ENCODE measurements at regions of chr19 and their contacts with region 1.

Region 1: GRCh38 chr19:43809762-43810696 is 7.8 kb upstream of the LYPD5 start:
- DNase-seq: peak in 3 of 14 experiments; percentile 63 to 76 (median 73)
- ATAC-seq: peak; percentile 70
- H3K4me3 ChIP-seq: no peak overlapping the region
- H3K4me3 Mint-ChIP-seq: no peak overlapping the region
- H3K27ac ChIP-seq: no peak overlapping the region
- H3K27ac Mint-ChIP-seq: no peak overlapping the region
- H3K4me1 ChIP-seq: peaks cover 8% of the 10 kb centered on the region
- H3K4me1 Mint-ChIP-seq: no peaks in the 10 kb centered on the region
- H3K27me3 ChIP-seq: no peaks in the 10 kb centered on the region
- H3K27me3 Mint-ChIP-seq: peaks cover 31% of the 10 kb centered on the region
- CTCF ChIP-seq: peak; percentile 74

Region 2: GRCh38 chr19:43438291-43439096 is 371.5 kb before region 1 on chr19:
- CTCF ChIA-PET with region 1: no interaction called
- POLR2A ChIA-PET with region 1: no interaction called
- intact Hi-C with region 1: loop called in 1 of 2 experiments (anchors 10 kb)
- DNase-seq: peak in 7 of 14 experiments; percentile 10 to 34 (median 26)
- ATAC-seq: peak; percentile 37
- H3K4me3 ChIP-seq: no peak overlapping the region
- H3K4me3 Mint-ChIP-seq: peak overlapping the region; percentile 76
- H3K27ac ChIP-seq: peak overlapping the region; percentile 74 to 90
- H3K27ac Mint-ChIP-seq: peak overlapping the region; percentile 96
- H3K4me1 ChIP-seq: peaks cover 41% of the 10 kb centered on the region
- H3K4me1 Mint-ChIP-seq: peaks cover 64% of the 10 kb centered on the region
- H3K27me3 ChIP-seq: no peaks in the 10 kb centered on the region
- H3K27me3 Mint-ChIP-seq: no peaks in the 10 kb centered on the region
- CTCF ChIP-seq: no peak

Region 3: DNA sequence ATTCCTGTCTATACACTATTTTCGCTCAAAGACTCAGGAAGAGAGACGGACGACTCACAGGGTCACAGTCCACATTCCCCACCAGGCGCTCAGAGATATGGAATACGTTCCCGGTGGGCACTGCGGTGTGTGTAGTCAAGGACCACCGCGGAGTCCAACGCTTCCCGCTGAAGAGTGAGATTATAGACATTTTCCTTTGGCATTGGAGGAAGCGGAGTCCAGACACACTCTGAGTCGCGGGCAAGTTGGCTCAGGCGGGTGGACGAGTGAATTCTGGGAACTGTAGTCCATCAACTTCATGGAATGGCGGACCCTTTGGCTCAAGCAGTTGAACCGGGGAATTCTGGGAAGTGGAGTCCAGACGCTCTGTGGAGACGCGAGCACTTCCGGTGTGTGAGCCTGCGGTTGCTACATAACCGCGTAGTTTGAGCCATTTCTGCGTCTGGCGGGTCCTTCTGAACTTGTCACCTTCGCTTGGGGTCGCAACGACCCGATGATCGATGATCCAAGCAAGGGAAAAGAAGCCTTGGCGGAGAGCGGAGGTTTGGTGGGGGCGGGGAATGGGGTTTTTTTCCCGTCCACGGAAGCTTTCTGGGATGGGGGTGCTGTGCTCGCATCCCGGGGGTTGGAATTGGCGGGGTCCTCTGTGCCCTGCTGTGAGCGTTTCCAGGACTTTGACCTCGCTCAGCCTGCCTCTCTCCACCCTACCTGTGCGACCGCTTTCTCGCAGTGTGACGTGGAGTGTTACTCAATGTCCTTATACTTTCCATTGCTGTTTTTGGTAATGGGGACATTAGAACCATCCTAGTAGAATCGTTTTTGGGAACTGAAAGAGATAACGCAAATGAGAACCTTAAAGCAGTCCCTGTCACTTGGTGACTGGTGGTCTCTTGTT is 192.8 kb after region 1 on chr19 and contains the start of gene ZNF230:
- CTCF ChIA-PET with region 1: no interaction called
- POLR2A ChIA-PET with region 1: no interaction called
- intact Hi-C with region 1: no loop called
- DNase-seq: peak; percentile 56 to 96 (median 75)
- ATAC-seq: peak; percentile 97
- H3K4me3 ChIP-seq: peak within 1 kb of the TSS; percentile 84
- H3K4me3 Mint-ChIP-seq: peak within 1 kb of the TSS; percentile 100
- H3K27ac ChIP-seq: peak within 1 kb of the TSS; percentile 39 to 53
- H3K27ac Mint-ChIP-seq: peak within 1 kb of the TSS; percentile 90
- H3K4me1 ChIP-seq: peaks cover 18% of the 10 kb centered on the region
- H3K4me1 Mint-ChIP-seq: peaks cover 29% of the 10 kb centered on the region
- H3K27me3 ChIP-seq: no peaks in the 10 kb centered on the region
- H3K27me3 Mint-ChIP-seq: no peaks in the 10 kb centered on the region
- CTCF ChIP-seq: no peak
- total RNA-seq, gene ZNF230: 2.2 to 2.8 TPM